ENCODE measurements at regions of chr1 and their contacts with region 1.

Region 1: GRCh38 chr1:156728597-156729462 is at the start of gene ISG20L2:
- DNase-seq: peak; percentile 83
- ATAC-seq: peak; percentile 91
- H3K4me3 Mint-ChIP-seq: no peak within 1 kb of the TSS
- H3K27ac Mint-ChIP-seq: peak within 1 kb of the TSS; percentile 93
- H3K4me1 Mint-ChIP-seq: peaks cover 25% of the 10 kb centered on the region
- H3K27me3 Mint-ChIP-seq: no peaks in the 10 kb centered on the region
- CTCF ChIP-seq: no peak
- total RNA-seq, gene ISG20L2: 50.8 and 53.0 TPM in 2 replicates

Region 2: DNA sequence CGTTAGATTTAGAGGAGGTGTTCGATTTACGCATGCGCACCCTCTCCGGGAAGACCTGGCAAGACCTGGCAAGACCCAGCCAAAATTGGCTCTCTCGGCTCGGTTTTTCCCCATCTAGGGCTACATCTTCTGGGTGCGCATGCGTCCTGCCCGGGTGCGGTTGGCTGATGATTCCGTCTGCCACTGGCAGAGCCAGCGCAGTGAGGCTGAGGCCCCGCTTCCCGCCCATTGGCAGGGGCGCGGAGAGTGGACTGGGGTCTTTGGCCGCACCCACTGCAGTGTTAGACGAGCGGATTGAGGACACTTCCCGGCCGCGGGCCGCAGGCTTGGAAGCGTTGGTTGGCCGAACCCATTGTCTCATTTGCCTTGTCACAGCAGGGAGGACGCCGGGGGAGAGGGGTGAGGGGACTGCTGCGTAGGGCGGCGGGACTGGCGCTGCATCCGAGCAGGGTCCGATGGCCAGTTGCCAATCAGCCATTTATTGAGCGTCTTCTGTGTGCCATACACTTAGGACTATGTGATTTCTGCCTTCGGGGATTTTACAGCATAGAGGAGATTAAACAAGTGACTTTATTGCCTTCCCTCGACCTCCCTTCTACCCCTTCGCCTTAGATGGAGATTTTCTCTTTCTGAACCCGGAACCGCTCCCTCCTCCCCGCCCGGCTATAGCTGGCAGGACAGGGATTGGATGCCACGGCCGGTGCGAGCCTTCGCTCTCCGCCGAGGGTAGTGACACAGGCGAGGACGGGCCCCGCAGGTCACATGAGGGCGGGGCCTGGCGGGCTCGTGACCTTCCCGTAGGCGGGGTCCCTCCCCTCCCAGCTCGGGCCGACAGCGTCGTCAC is 272.0 kb before region 1 on chr1:
- CTCF ChIA-PET with region 1: no interaction called
- POLR2A ChIA-PET with region 1: no interaction called
- intact Hi-C with region 1: loop called (anchors 2 kb)
- DNase-seq: peak; percentile 88
- ATAC-seq: peak; percentile 84
- H3K4me3 Mint-ChIP-seq: peak overlapping the region; percentile 91
- H3K27ac Mint-ChIP-seq: peak overlapping the region; percentile 97
- H3K4me1 Mint-ChIP-seq: peaks cover 19% of the 10 kb centered on the region
- H3K27me3 Mint-ChIP-seq: no peaks in the 10 kb centered on the region
- CTCF ChIP-seq: no peak

Region 3: DNA sequence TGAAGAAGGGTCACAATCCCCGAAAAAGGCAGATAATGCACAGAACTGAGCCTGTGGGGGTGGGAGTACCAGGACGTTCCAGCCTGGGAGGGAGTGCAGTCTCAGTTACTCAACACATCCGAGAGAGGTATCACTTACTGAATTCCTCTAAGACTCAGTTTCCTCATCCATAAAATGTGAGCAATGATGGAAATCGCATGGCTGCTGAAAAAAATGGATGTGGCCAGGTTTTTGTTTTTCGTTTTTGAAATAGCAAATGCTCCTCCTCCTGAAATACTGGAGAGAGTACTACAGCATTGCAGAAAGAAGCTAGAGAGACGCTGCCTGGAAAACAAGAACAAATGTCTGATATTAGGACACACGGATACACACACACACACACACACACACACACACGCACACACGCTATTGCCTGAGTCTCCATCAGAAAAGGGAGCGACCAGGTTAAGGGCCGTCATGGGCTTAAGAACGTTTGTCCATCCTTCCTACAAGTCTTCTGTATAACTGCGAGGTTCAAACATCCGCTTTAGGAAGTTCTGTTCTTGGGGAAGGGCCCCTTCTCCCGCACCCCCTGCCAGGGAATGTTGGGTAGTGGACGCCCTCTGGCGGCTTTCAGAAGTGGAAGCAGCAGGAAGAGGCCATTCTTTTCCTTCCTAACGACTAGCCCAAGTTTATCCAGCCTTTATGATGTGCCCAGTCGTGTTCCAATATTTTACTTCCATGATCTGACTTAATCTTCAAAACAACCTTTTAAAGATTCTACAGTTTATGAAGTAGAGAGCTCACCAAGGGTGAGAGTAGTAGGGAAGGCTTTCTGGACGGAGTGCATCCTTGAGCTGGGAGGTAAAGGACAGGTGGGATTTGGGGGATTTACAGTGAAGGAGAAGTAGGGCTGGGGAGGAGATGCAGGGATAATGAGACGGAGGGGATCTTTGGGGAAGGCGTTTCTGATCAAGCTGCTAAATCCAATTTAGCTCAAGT is 50.9 kb before region 1 on chr1:
- CTCF ChIA-PET with region 1: interaction called, 18 read pairs
- POLR2A ChIA-PET with region 1: interaction called, 4 read pairs
- intact Hi-C with region 1: no loop called
- DNase-seq: no peak
- ATAC-seq: peak; percentile 49
- H3K4me3 Mint-ChIP-seq: peak overlapping the region; percentile 32
- H3K27ac Mint-ChIP-seq: no peak overlapping the region
- H3K4me1 Mint-ChIP-seq: peaks cover 27% of the 10 kb centered on the region
- H3K27me3 Mint-ChIP-seq: peaks cover 69% of the 10 kb centered on the region
- CTCF ChIP-seq: no peak

Region 4: DNA sequence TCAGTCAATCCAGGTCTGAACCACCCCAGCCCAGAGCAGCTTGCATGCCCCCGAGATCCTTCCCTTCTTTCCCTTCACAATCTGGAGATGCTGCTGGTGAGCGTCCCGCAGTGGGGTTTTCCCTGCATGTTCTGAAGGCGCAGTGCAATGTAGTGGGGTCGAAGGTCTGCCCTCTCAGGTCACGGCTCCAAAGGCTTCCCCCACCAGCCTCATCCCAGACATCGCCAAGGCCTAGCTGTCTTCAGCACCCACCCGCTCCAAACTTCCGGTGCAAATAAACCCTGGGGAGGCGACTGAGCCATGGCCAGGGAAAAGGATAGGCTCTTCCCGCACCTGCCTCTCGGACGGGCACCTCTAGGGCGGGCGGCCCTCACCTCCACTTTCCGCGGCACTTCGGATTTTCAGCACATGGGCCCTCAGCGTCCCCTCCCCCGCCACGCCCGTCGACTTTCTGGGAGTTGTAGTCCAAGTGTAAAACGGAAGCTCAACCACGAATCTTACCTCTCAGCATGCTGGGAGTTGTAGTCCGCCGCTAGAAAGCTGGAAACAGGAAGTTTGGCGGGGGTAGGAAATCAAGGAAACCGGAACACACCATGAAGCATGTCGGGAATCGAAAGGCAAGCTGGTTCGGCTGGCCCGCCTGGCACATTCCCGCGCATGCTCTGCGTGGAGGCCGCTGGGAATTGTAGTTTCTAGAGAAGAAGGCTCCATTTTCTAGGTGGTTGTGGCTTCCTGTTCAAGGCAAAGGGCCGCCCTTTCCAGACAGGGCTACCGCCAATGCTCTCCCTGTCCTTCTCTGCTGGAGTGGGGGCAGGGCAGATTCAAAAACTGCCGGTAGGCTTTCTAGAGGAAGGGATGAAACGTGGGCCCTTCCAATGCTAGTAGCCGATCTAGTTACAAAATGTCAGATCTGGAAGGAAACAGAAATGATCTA is 12.1 kb after region 1 on chr1 and contains the start of gene MRPL24:
- CTCF ChIA-PET with region 1: interaction called, 18 read pairs
- POLR2A ChIA-PET with region 1: interaction called, 153 read pairs
- intact Hi-C with region 1: loop called (anchors 1 kb)
- DNase-seq: peak; percentile 87
- ATAC-seq: peak; percentile 89
- H3K4me3 Mint-ChIP-seq: peak within 1 kb of the TSS; percentile 98
- H3K27ac Mint-ChIP-seq: peak within 1 kb of the TSS; percentile 97
- H3K4me1 Mint-ChIP-seq: peaks cover 33% of the 10 kb centered on the region
- H3K27me3 Mint-ChIP-seq: no peaks in the 10 kb centered on the region
- CTCF ChIP-seq: no peak
- total RNA-seq, gene MRPL24: 65.8 and 83.7 TPM in 2 replicates

Region 5: GRCh38 chr1:156767101-156767878 is 38.5 kb after region 1 on chr1 and contains the start of gene PRCC:
- CTCF ChIA-PET with region 1: interaction called, 25 read pairs
- POLR2A ChIA-PET with region 1: interaction called, 105 read pairs
- intact Hi-C with region 1: loop called (anchors 1 kb)
- DNase-seq: peak; percentile 88
- ATAC-seq: peak; percentile 91
- H3K4me3 Mint-ChIP-seq: no peak within 1 kb of the TSS
- H3K27ac Mint-ChIP-seq: no peak within 1 kb of the TSS
- H3K4me1 Mint-ChIP-seq: peaks cover 38% of the 10 kb centered on the region
- H3K27me3 Mint-ChIP-seq: no peaks in the 10 kb centered on the region
- CTCF ChIP-seq: no peak
- total RNA-seq, gene PRCC: 80.4 and 81.4 TPM in 2 replicates

Region 6: GRCh38 chr1:156892190-156893047 is 163.6 kb after region 1 on chr1:
- CTCF ChIA-PET with region 1: interaction called, 17 read pairs
- POLR2A ChIA-PET with region 1: no interaction called
- intact Hi-C with region 1: loop called (anchors 2 kb)
- DNase-seq: peak; percentile 70
- ATAC-seq: peak; percentile 90
- H3K4me3 Mint-ChIP-seq: peak overlapping the region; percentile 61
- H3K27ac Mint-ChIP-seq: no peak overlapping the region
- H3K4me1 Mint-ChIP-seq: peaks cover 9% of the 10 kb centered on the region
- H3K27me3 Mint-ChIP-seq: peaks cover 64% of the 10 kb centered on the region
- CTCF ChIP-seq: peak; percentile 32